ENCODE measurements at regions of chr3 and their contacts with region 1.

Region 1: GRCh38 chr3:39388741-39389248 is 5.6 kb downstream of the SLC25A38 start:
- DNase-seq: peak; percentile 89
- ATAC-seq: peak; percentile 74
- H3K4me3 ChIP-seq: peak overlapping the region; percentile 49
- H3K27ac ChIP-seq: peak overlapping the region; percentile 85
- H3K4me1 ChIP-seq: peaks cover 24% of the 10 kb centered on the region
- H3K27me3 ChIP-seq: no peaks in the 10 kb centered on the region
- CTCF ChIP-seq: no peak
- EP300 ChIP-seq: no peak
- POLR2A ChIP-seq: no peak
- RAD21 ChIP-seq: no peak

Region 2: GRCh38 chr3:39226106-39226741 is 162.6 kb before region 1 on chr3:
- CTCF ChIA-PET with region 1: no interaction called
- POLR2A ChIA-PET with region 1: no interaction called
- RAD21 ChIA-PET with region 1: no interaction called
- SMC1A ChIA-PET with region 1: no interaction called
- in situ Hi-C with region 1: no loop called
- intact Hi-C with region 1: no loop called
- DNase-seq: no peak
- ATAC-seq: peak; percentile 91
- H3K4me3 ChIP-seq: no peak overlapping the region
- H3K27ac ChIP-seq: no peak overlapping the region
- H3K4me1 ChIP-seq: peaks cover 11% of the 10 kb centered on the region
- H3K27me3 ChIP-seq: no peaks in the 10 kb centered on the region
- CTCF ChIP-seq: no peak
- EP300 ChIP-seq: no peak
- POLR2A ChIP-seq: no peak
- RAD21 ChIP-seq: no peak

Region 3: GRCh38 chr3:39315420-39315819 is 73.4 kb before region 1 on chr3:
- CTCF ChIA-PET with region 1: no interaction called
- POLR2A ChIA-PET with region 1: no interaction called
- RAD21 ChIA-PET with region 1: no interaction called
- SMC1A ChIA-PET with region 1: no interaction called
- in situ Hi-C with region 1: no loop called
- intact Hi-C with region 1: no loop called
- DNase-seq: no peak
- ATAC-seq: peak; percentile 57
- H3K4me3 ChIP-seq: no peak overlapping the region
- H3K27ac ChIP-seq: no peak overlapping the region
- H3K4me1 ChIP-seq: no peaks in the 10 kb centered on the region
- H3K27me3 ChIP-seq: no peaks in the 10 kb centered on the region
- CTCF ChIP-seq: no peak
- EP300 ChIP-seq: no peak
- POLR2A ChIP-seq: no peak
- RAD21 ChIP-seq: no peak

Region 4: GRCh38 chr3:39406368-39407258 is 17.8 kb after region 1 on chr3 and contains the start of gene RPSA:
- CTCF ChIA-PET with region 1: interaction called, 55 read pairs
- POLR2A ChIA-PET with region 1: interaction called, 11 read pairs
- RAD21 ChIA-PET with region 1: interaction called, 24 read pairs
- SMC1A ChIA-PET with region 1: interaction called, 44 read pairs
- in situ Hi-C with region 1: no loop called
- intact Hi-C with region 1: loop called (anchors 1 kb)
- DNase-seq: peak; percentile 93
- ATAC-seq: peak; percentile 91
- H3K4me3 ChIP-seq: peak within 1 kb of the TSS; percentile 94
- H3K27ac ChIP-seq: peak within 1 kb of the TSS; percentile 83
- H3K4me1 ChIP-seq: no peaks in the 10 kb centered on the region
- H3K27me3 ChIP-seq: no peaks in the 10 kb centered on the region
- CTCF ChIP-seq: peak; percentile 42 to 55 (median 42); a peak in 5 of 6 replicates
- EP300 ChIP-seq: 0 out of 4 replicates have a peak, but pooled peaks of 1 of the 2 experiments have one; percentile 24
- POLR2A ChIP-seq: peak; percentile 100
- RAD21 ChIP-seq: peak; percentile 51
- polyA plus RNA-seq, gene RPSA: 2,843 to 4,532 TPM

Region 5: DNA sequence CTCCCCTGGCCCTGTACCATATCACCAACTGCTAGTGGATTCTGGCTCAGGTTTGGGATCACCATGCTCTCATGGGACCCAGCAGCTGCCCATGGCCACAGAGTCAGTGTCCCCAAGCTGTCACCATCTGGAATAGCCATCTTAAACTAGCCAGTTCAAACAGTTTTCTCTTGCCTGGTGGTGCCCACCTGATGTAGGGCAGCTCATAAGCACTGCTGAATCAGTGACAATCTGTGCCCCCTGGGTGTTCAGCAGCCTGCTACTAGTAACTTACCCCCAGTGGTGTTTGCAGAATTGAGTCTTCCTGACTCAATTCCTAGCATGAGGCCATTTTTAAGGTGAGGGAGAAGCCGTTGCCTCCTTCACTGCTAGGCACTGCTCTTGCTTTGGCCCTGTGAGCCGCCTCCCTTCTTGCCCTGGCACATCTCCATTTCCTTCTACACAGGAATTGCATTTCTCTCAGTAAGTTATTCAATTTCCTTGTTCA is 25.7 kb after region 1 on chr3:
- CTCF ChIA-PET with region 1: interaction called, 55 read pairs
- POLR2A ChIA-PET with region 1: interaction called, 3 read pairs
- RAD21 ChIA-PET with region 1: interaction called, 20 read pairs
- SMC1A ChIA-PET with region 1: interaction called, 10 read pairs
- in situ Hi-C with region 1: no loop called
- intact Hi-C with region 1: no loop called
- DNase-seq: no peak
- ATAC-seq: peak; percentile 8
- H3K4me3 ChIP-seq: no peak overlapping the region
- H3K27ac ChIP-seq: no peak overlapping the region
- H3K4me1 ChIP-seq: no peaks in the 10 kb centered on the region
- H3K27me3 ChIP-seq: no peaks in the 10 kb centered on the region
- CTCF ChIP-seq: no peak
- EP300 ChIP-seq: no peak
- POLR2A ChIP-seq: peak; percentile 67
- RAD21 ChIP-seq: no peak